ENCODE measurements at regions of chrX and their contacts with region 1.

Region 1: GRCh38 chrX:55160685-55161552 is 59.2 kb upstream of the PAGE5 start:
- DNase-seq: peak; percentile 91
- H3K4me3 ChIP-seq: peak overlapping the region; percentile 62 to 83 (median 65)
- H3K27ac ChIP-seq: peak overlapping the region; percentile 74
- H3K4me1 ChIP-seq: peaks cover 5% of the 10 kb centered on the region
- H3K27me3 ChIP-seq: no peaks in the 10 kb centered on the region
- CTCF ChIP-seq: peak; percentile 24 to 52
- POLR2A ChIP-seq: peak; percentile 77

Region 2: DNA sequence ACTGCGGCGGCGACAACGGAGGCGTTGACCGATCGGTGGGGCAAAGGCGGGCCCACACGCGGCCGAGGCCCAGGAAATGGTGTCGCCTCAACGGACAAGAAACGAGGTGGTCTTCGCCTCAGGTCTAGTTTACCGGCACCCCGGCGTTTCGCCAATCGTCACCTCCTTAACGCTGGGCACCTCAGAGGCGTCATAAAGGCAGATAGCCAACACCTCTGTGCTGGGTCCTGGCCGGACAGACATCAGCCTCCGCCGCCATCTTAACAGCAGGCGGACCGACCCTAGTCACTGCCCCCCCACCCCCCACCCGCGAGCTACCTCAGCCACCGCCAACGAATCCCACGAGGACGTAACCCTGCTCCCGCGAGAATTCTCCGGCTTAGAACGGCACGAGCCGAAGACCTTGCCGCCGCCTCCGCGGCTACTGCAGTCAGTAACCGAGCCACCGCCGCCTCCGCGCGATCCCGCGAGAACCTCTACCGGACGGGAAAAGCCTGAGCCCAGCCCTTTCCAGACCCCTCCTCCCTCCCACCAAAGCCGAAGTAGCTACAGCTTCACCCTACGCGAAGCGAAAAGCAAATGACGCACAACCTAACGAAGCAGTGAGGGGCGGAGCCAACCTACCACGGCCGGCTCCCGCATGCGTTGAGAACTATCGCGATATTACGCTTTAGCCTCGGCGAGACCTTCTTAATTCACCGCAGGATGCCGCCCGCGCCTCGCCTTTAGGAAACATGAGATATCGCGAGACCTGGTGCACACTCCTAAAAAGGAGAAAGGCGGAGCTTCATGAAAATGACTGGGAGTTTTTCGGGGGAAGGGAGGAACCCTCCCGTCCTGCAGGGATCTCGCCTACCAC is 1477.1 kb before region 1 on chrX:
- CTCF ChIA-PET with region 1: no interaction called
- POLR2A ChIA-PET with region 1: no interaction called
- dilution Hi-C with region 1: no loop called
- intact Hi-C with region 1: loop called (anchors 10 kb)
- DNase-seq: peak; percentile 99
- H3K4me3 ChIP-seq: peak overlapping the region; percentile 79 to 98 (median 92)
- H3K27ac ChIP-seq: peak overlapping the region; percentile 88
- H3K4me1 ChIP-seq: peaks cover 23% of the 10 kb centered on the region
- H3K27me3 ChIP-seq: no peaks in the 10 kb centered on the region
- CTCF ChIP-seq: no peak
- POLR2A ChIP-seq: no peak

Region 3: DNA sequence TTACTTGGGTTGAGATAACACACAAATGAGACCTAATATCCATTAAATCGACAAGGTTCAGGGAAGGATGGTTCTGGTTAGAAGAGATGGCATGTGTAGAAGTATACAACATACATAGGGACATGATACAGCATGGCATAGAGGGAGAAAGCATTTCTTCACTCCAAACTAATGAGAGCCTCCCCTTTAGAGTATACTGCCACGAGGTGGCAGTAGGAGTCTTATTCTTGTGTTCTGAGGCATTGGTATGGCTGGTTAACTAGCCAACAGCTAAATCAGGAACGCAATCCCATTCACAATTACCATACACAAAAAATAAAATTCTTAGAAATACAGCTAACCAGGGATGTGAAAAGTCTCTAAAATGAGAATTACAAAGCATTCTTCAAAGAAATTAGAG is 269.3 kb before region 1 on chrX:
- CTCF ChIA-PET with region 1: no interaction called
- POLR2A ChIA-PET with region 1: no interaction called
- dilution Hi-C with region 1: no loop called
- intact Hi-C with region 1: loop called (anchors 10 kb)
- DNase-seq: peak; percentile 40
- H3K4me3 ChIP-seq: no peak overlapping the region
- H3K27ac ChIP-seq: no peak overlapping the region
- H3K4me1 ChIP-seq: no peaks in the 10 kb centered on the region
- H3K27me3 ChIP-seq: no peaks in the 10 kb centered on the region
- CTCF ChIP-seq: peak; percentile 23 to 38
- POLR2A ChIP-seq: no peak

Region 4: GRCh38 chrX:55057675-55058249 is 103.2 kb before region 1 on chrX:
- CTCF ChIA-PET with region 1: no interaction called
- POLR2A ChIA-PET with region 1: no interaction called
- dilution Hi-C with region 1: no loop called
- intact Hi-C with region 1: loop called (anchors 1 kb)
- DNase-seq: peak; percentile 65
- H3K4me3 ChIP-seq: peak overlapping the region in 1 of 3 experiments; percentile 15
- H3K27ac ChIP-seq: peak overlapping the region; percentile 87
- H3K4me1 ChIP-seq: peaks cover 4% of the 10 kb centered on the region
- H3K27me3 ChIP-seq: no peaks in the 10 kb centered on the region
- CTCF ChIP-seq: peak; percentile 45 to 54
- POLR2A ChIP-seq: no peak

Region 5: DNA sequence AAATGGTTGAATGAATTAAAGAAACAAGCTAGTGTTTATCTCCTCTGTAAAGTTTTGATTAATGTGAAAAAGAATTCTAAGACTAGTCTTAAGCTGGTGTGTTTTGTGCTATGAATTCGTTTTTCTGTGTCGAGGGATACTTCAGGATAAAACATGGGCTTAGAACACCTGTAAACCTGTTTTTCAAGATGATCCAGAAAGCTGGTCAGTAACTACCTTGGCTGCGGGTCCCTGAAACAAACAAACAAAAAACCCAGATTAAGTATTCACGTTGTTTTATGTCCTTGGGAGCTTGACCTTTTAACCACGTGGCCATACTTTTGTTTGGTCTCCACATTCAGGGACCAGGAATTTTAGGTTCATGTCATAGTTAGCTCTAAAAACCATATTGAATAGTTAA is 107.2 kb after region 1 on chrX:
- CTCF ChIA-PET with region 1: no interaction called
- POLR2A ChIA-PET with region 1: no interaction called
- dilution Hi-C with region 1: no loop called
- intact Hi-C with region 1: no loop called
- DNase-seq: no peak
- H3K4me3 ChIP-seq: no peak overlapping the region
- H3K27ac ChIP-seq: no peak overlapping the region
- H3K4me1 ChIP-seq: no peaks in the 10 kb centered on the region
- H3K27me3 ChIP-seq: no peaks in the 10 kb centered on the region
- CTCF ChIP-seq: no peak
- POLR2A ChIP-seq: no peak

Region 6: DNA sequence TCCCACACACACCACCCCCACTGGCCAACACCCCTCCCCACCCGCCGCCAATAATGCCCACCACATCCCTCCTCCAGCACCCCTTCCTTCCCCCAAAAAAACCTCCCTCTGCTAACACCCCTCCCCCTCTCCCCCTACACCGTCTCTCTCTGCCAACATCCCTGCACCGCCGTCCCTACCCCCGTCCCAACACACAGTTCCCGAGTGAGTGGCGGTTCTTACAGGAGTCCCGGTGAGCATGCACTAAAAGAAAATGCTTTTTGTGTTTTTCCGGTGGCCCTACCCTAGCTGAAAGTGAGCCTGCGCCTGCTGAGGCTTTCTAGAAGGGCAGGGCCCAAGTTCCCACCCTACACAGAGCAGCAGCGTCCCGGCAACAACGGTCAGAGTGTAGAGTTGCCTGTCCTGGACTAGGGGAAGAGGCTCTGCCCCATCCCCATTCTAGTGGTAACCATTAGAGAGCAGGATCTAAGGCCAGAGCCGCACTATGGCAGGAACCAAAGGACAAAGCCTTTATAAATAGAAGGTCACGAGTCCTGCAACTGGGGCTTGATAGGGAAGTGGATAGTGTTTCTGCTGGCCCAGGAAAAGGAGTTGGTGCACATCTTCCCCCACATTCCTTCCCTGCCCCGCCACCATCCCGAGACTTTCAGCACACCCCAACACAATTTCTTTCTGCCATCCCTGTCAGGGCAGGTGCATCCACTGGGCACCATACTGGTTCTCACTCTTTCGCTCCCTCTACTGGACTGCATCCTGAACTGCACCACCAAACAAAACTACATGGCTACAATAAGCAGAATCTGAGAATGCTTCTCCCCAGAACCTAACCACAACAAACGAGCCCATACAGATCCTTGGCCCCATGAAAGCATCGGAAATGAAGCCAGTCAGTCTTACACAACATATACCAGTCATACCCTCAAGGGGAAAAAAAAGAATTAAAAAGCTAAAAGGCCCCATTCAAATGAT is 181.9 kb after region 1 on chrX:
- CTCF ChIA-PET with region 1: no interaction called
- POLR2A ChIA-PET with region 1: no interaction called
- dilution Hi-C with region 1: no loop called
- intact Hi-C with region 1: loop called (anchors 1 kb)
- DNase-seq: peak; percentile 41
- H3K4me3 ChIP-seq: no peak overlapping the region
- H3K27ac ChIP-seq: no peak overlapping the region
- H3K4me1 ChIP-seq: no peaks in the 10 kb centered on the region
- H3K27me3 ChIP-seq: no peaks in the 10 kb centered on the region
- CTCF ChIP-seq: peak; percentile 35 to 59
- POLR2A ChIP-seq: no peak